Panc1 (cell line): ENCODE measurements at regions of chr2 and their contacts with region 1.

Region 1: DNA sequence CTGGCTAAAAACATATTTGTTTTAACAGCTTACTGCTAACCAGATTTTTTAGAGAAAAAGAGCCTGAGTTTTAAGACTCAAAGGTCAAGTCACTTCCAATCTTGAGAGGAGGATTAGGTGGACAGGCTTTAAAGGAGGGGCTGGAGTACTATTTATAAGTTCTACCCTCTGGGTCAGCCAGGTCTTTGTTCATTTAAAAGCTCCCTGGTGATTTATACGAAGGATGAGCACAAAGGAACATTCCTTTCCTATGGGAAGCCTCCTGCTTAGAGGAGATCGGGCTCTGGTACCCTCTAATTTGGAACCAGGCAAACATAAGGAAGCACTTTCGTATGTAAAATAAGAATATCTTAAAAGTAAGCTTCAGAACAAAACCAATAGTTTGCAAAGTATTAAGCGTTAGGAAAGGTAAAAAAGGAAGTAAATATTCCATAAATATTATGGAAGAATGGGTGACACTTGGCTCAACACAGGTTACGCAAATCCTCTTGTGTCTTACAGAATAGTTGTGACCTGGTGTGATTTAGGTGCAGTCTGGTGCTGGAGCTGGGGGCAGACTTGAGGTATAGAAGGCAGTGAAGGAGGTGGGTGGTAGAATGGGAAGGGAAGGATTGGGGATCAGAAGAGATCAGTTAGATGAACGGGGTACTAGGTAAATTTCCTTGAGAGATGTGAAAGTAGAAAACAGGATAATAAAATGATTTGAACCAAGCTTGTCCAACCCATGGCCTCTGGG is 35.6 kb downstream of the PDE6D start:
- DNase-seq: no peak
- ATAC-seq: no peak
- H3K4me3 ChIP-seq: no peak overlapping the region
- H3K27ac ChIP-seq: no peak overlapping the region
- H3K4me1 ChIP-seq: no peaks in the 10 kb centered on the region
- H3K27me3 ChIP-seq: no peaks in the 10 kb centered on the region
- CTCF ChIP-seq: no peak

Region 2: DNA sequence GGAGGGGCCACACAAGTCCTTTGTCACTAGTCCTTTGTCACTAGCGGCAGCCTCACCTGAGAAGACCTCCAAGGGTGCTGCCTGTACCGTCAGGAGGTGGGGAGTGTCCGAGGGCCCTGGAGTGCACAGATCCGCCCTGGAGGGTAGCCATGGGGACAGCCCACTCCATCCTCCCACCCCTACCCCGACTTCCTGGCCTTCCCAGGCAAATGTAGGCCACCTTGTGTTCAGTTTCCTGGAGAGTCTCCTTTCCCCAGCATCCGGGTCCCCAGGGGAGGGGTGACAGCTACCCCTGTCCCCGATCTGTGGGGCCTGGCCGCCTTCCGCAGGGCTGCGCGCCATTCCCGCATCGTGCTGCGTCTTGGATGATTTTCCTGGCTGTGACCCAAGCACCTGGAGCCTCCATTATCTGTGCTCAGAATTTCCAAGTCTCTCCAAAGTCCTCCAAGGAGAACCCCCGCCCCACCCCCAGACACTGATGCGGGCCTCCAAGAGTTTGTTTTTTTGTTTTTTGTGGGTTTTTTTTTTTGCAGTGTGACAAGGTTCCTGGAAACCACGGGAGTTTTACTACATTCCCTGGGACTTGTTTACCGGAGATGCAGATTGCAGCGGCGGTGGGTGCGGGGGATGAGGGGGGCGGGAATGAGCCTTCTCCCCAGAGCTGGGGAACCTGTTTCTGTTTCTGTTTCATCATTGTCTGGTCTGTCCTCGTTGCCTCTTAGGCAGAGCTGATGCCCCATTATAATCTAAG is 124.2 kb before region 1 on chr2:
- CTCF ChIA-PET with region 1: no interaction called
- POLR2A ChIA-PET with region 1: interaction called, 16 read pairs
- in situ Hi-C with region 1: no loop called
- intact Hi-C with region 1: no loop called
- DNase-seq: no peak
- ATAC-seq: peak; percentile 54
- H3K4me3 ChIP-seq: peak overlapping the region; percentile 10 to 29; a peak in 3 of 4 replicates
- H3K27ac ChIP-seq: peak overlapping the region; percentile 83
- H3K4me1 ChIP-seq: peaks cover 42% of the 10 kb centered on the region
- H3K27me3 ChIP-seq: no peaks in the 10 kb centered on the region
- CTCF ChIP-seq: no peak

Region 3: DNA sequence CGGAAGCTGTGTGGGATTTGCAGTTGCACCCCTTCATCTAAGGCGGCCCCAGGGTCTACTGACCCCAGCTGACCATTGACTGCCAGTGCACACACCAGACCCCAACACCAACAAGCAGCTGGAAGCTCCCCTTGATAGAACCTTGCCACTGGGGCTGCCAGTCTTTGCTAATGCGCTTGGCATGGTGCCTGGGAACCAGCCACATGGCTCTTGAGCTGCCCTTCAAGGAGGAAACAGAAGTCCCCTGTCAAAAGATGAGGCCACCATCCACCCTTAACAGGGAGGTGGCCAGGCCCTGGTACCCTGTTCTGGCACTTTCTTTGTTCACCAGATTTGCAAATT is 719.0 kb after region 1 on chr2:
- CTCF ChIA-PET with region 1: no interaction called
- POLR2A ChIA-PET with region 1: interaction called, 13 read pairs
- in situ Hi-C with region 1: no loop called
- intact Hi-C with region 1: no loop called
- DNase-seq: no peak
- ATAC-seq: peak; percentile 42; the same call in 1 of the 2 replicates
- H3K4me3 ChIP-seq: no peak overlapping the region
- H3K27ac ChIP-seq: no peak overlapping the region
- H3K4me1 ChIP-seq: no peaks in the 10 kb centered on the region
- H3K27me3 ChIP-seq: no peaks in the 10 kb centered on the region; the same call in 1 of the 2 replicates
- CTCF ChIP-seq: no peak